MCF 10A (cell line): ENCODE measurements at regions of chr14 and their contacts with region 1.

Region 1: DNA sequence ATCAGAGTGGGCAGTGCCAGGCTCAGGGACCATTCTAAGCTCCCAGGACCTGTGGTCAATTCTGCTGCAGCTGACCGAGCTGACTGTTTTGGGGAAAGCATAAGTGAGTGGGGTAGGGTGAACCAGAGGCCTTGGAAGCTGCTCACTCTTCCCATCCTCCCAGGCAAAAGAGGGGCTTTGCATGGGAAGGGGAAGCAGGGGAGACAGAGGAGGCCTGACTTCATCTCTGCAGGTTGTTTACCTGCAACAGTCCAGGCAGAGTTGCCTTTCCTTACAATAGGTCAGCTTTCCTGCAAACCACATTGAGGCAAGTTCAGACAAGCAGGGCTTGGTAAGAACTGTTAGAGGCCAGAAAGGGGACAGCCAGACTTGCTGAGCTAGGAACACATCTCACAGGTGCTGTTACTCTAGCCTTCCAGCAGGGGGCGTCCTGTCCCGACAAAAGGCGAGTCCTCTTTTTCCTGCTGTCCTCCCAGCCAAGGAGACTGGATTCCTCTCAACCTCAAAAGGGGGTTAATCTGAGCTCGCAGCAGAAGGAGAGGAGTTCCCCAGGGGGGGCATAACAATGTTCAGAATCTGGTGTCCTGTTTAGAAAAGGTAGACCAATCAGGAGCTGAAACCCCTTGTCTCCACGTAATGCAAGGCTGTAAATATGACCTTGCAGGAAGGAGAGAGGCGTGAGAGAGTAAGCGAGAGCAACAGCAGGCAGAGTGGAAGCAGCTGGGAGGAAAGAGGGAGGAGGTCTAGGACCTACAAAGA is 4.3 kb upstream of the DHRS2 start:
- DNase-seq: peak; percentile 91
- H3K4me3 Mint-ChIP-seq: no peak overlapping the region
- H3K27ac Mint-ChIP-seq: no peak overlapping the region
- H3K4me1 Mint-ChIP-seq: peaks cover 9% of the 10 kb centered on the region
- H3K27me3 Mint-ChIP-seq: no peaks in the 10 kb centered on the region
- CTCF ChIP-seq: peak; percentile 89

Region 2: DNA sequence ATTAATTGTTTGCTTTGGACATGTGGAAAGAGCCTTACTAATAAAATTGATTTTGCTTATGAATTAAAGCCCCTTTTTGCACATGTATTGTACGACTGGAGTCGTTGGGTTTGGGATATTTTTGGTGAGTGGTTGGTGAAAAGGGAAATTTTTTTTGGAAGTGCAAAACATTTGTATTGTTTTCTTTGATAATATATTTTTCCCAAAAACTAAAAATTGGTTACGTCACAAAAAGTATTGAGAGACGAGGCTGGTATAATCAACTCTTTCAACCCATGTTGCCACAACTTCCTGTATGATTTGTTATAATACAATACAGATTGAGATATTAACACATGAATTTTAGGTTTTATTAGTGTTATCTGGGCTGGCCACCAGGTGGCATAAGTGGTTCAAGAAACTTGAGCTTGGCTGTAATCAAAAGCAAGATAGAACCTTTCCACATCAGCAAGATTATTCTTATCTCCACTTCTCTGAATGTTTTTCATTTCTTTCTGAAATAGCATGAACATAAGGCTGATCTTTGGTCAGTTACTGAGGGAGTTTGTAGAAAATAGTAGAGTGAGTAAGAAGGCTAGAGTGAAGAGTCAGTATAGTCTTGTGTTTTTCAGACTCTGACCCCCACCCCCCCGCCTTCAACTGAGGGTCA is 153.6 kb before region 1 on chr14:
- CTCF ChIA-PET with region 1: interaction called, 13 read pairs
- POLR2A ChIA-PET with region 1: no interaction called
- intact Hi-C with region 1: no loop called
- DNase-seq: peak; percentile 58
- H3K4me3 Mint-ChIP-seq: no peak overlapping the region
- H3K27ac Mint-ChIP-seq: no peak overlapping the region
- H3K4me1 Mint-ChIP-seq: peaks cover 5% of the 10 kb centered on the region
- H3K27me3 Mint-ChIP-seq: no peaks in the 10 kb centered on the region
- CTCF ChIP-seq: peak; percentile 59

Region 3: DNA sequence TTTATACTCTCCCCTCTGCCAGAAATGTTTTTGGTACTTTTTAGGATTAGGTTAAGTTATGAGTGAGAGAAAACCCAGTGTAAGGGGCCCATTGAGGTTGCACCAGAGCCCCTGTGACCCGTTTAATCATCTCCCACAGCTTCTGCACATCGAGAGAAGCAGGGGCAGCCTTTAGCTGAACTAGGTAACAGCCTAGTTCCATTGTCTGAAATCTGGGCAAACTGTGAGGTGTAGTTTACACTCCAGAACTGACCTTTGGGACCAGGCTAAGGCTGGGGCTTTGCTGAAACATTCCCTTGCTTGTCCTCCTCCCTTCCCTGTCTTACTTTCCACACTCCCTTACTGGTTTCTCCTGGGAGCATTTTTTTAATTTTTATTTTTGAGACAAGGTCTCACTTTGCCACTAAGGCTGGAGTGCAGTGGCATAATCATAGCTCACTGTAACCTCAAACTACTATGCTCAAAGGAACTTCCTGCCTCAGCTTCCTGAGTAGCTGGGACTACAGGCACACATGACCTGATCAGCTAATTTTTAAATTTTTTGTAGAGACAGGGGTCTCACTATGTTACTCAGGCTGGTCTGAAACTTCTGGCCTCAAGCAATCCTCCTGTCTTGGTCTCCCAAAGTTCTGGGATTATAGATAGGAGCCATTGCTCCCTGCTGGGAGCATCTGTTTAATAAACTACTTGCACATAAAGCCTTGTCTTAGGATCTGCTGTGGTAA is 21.6 kb before region 1 on chr14:
- CTCF ChIA-PET with region 1: interaction called, 19 read pairs
- POLR2A ChIA-PET with region 1: no interaction called
- intact Hi-C with region 1: no loop called
- DNase-seq: no peak
- H3K4me3 Mint-ChIP-seq: no peak overlapping the region
- H3K27ac Mint-ChIP-seq: no peak overlapping the region
- H3K4me1 Mint-ChIP-seq: no peaks in the 10 kb centered on the region
- H3K27me3 Mint-ChIP-seq: peaks cover 46% of the 10 kb centered on the region
- CTCF ChIP-seq: no peak

Region 4: GRCh38 chr14:23654231-23654630 is 22.4 kb after region 1 on chr14:
- CTCF ChIA-PET with region 1: interaction called, 18 read pairs
- POLR2A ChIA-PET with region 1: no interaction called
- intact Hi-C with region 1: no loop called
- DNase-seq: no peak
- H3K4me3 Mint-ChIP-seq: no peak overlapping the region
- H3K27ac Mint-ChIP-seq: no peak overlapping the region
- H3K4me1 Mint-ChIP-seq: no peaks in the 10 kb centered on the region
- H3K27me3 Mint-ChIP-seq: peaks cover 25% of the 10 kb centered on the region
- CTCF ChIP-seq: no peak

Region 5: DNA sequence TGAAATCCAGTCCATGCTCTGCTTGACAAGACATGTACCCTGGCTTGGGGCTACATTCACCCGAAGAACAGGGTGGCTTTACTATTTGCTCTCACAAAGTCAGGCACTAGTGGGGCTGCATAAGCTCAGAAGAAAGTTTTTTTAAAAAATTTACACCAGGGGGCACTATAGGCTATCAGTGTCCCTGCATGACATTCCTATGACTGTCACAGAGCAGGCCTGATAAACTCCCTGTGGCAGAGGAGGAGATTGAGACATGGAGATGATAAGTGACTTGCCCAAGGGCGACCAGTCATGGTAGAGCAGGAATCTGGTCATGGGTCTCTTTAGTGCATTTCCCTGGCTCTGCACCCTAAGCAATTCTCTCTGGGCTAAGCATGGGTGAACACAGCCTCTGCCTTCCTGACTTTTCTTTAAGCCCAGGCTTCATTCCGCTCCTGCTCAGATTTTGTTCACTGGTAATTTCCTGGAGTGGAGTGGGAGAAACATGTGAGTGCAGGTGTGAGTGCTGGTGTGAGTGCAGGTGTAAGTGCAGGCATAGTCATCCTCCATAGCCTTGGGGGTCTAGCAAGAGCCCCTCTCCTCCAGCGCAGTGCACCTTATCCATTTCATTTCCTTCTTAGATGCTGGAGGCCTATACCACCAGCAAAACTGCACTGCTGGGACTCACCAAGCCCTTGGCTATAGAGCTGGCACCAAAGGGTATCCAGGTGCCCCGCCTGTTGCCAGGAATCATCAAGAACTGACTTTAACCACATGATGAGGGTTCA is 95.9 kb after region 1 on chr14:
- CTCF ChIA-PET with region 1: interaction called, 25 read pairs
- POLR2A ChIA-PET with region 1: no interaction called
- intact Hi-C with region 1: no loop called
- DNase-seq: peak; percentile 51
- H3K4me3 Mint-ChIP-seq: no peak overlapping the region
- H3K27ac Mint-ChIP-seq: no peak overlapping the region
- H3K4me1 Mint-ChIP-seq: peaks cover 7% of the 10 kb centered on the region
- H3K27me3 Mint-ChIP-seq: no peaks in the 10 kb centered on the region
- CTCF ChIP-seq: peak; percentile 49

Region 6: DNA sequence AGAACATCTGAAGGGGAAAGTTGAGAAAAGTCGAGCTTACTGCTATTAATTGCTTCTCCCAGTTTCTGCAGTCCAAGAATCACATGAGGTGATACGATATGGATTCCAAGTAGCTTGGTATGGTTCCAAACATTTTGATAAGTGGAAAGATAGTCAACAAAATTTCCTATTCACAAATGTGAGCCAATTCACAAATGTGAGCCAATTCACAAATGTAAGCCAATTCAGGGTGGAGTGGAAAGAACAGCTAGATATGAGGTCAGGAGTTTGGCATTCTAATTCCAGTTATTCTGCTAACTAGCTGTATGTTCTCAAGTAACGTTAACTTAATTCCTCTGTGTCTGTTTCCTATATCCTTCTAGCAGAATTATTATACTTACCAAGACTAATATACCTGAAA is 284.1 kb after region 1 on chr14:
- CTCF ChIA-PET with region 1: interaction called, 212 read pairs
- POLR2A ChIA-PET with region 1: interaction called, 6 read pairs
- intact Hi-C with region 1: no loop called
- DNase-seq: no peak
- H3K4me3 Mint-ChIP-seq: no peak overlapping the region
- H3K27ac Mint-ChIP-seq: no peak overlapping the region
- H3K4me1 Mint-ChIP-seq: no peaks in the 10 kb centered on the region
- H3K27me3 Mint-ChIP-seq: no peaks in the 10 kb centered on the region
- CTCF ChIP-seq: no peak

Region 7: GRCh38 chr14:23953464-23954278 is 321.8 kb after region 1 on chr14 and contains the start of gene DHRS4:
- CTCF ChIA-PET with region 1: interaction called, 12 read pairs
- POLR2A ChIA-PET with region 1: interaction called, 4 read pairs
- intact Hi-C with region 1: no loop called
- DNase-seq: peak; percentile 86
- H3K4me3 Mint-ChIP-seq: peak within 1 kb of the TSS; percentile 90
- H3K27ac Mint-ChIP-seq: peak within 1 kb of the TSS; percentile 93
- H3K4me1 Mint-ChIP-seq: peaks cover 19% of the 10 kb centered on the region
- H3K27me3 Mint-ChIP-seq: no peaks in the 10 kb centered on the region
- CTCF ChIP-seq: peak; percentile 77
- total RNA-seq, gene DHRS4: 28.4 and 32.5 TPM in 2 replicates